Activated T-helper 1 cell treated with anti-CD3 and anti-CD28 coated beads, Interleukin-12 subunit alpha, Interleukin-12 subunit beta, Interleukin-2, Interleukin-4 antibody, amounts not matched to agents 30 ng/mL and 10 ng/mL and 1 ng/mL, durations not matched to agents 14 hours and 24 hours and 36 hours (primary cell): ENCODE measurements at regions of chr11 and their contacts with region 1.

Region 1: DNA sequence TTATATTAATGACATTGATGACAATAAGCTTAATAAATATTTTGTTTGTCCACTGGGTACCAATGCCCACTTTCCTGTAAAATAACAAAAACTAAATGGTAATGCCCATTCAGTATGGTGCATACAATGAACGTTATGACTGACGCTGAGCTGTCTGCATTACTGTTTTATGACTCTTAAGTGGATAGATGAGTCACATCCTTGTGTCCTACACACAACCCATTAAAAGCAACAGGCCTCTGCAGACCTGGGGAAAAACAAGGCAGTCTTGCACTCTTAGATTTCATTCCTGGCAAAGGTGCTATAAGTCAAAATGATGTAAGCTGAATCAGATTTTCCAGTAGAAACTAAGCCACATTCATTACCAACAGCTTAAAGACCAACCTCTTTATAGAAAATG is 176.3 kb upstream of the TMEM45B start:
- DNase-seq: peak; percentile 24
- H3K4me3 Mint-ChIP-seq: peak overlapping the region; percentile 21
- H3K27ac Mint-ChIP-seq: peak overlapping the region; percentile 86
- H3K4me1 Mint-ChIP-seq: peaks cover 80% of the 10 kb centered on the region
- H3K27me3 Mint-ChIP-seq: no peaks in the 10 kb centered on the region

Region 2: GRCh38 chr11:128868841-128869580 is 770.3 kb before region 1 on chr11:
- intact Hi-C with region 1: loop called (anchors 5 kb)
- DNase-seq: no peak
- H3K4me3 Mint-ChIP-seq: no peak overlapping the region
- H3K27ac Mint-ChIP-seq: no peak overlapping the region
- H3K4me1 Mint-ChIP-seq: no peaks in the 10 kb centered on the region
- H3K27me3 Mint-ChIP-seq: peaks cover 13% of the 10 kb centered on the region

Region 3: GRCh38 chr11:129249351-129249750 is 389.9 kb before region 1 on chr11:
- intact Hi-C with region 1: no loop called
- DNase-seq: no peak
- H3K4me3 Mint-ChIP-seq: no peak overlapping the region
- H3K27ac Mint-ChIP-seq: no peak overlapping the region
- H3K4me1 Mint-ChIP-seq: peaks cover 11% of the 10 kb centered on the region
- H3K27me3 Mint-ChIP-seq: no peaks in the 10 kb centered on the region

Region 4: GRCh38 chr11:129279326-129280026 is 359.8 kb before region 1 on chr11:
- intact Hi-C with region 1: loop called (anchors 10 kb)
- DNase-seq: peak; percentile 74
- H3K4me3 Mint-ChIP-seq: peak overlapping the region; percentile 79
- H3K27ac Mint-ChIP-seq: peak overlapping the region; percentile 81
- H3K4me1 Mint-ChIP-seq: peaks cover 40% of the 10 kb centered on the region
- H3K27me3 Mint-ChIP-seq: peaks cover 29% of the 10 kb centered on the region

Region 5: GRCh38 chr11:129408865-129409444 is 230.3 kb before region 1 on chr11:
- intact Hi-C with region 1: loop called (anchors 2 kb)
- DNase-seq: no peak
- H3K4me3 Mint-ChIP-seq: no peak overlapping the region
- H3K27ac Mint-ChIP-seq: peak overlapping the region; percentile 87
- H3K4me1 Mint-ChIP-seq: peaks cover 24% of the 10 kb centered on the region
- H3K27me3 Mint-ChIP-seq: peaks cover 3% of the 10 kb centered on the region

Region 6: GRCh38 chr11:129447654-129448239 is 191.6 kb before region 1 on chr11:
- intact Hi-C with region 1: loop called (anchors 1 kb)
- DNase-seq: no peak
- H3K4me3 Mint-ChIP-seq: no peak overlapping the region
- H3K27ac Mint-ChIP-seq: peak overlapping the region; percentile 66
- H3K4me1 Mint-ChIP-seq: peaks cover 32% of the 10 kb centered on the region
- H3K27me3 Mint-ChIP-seq: peaks cover 2% of the 10 kb centered on the region

Region 7: GRCh38 chr11:129652828-129653227 is 13.5 kb after region 1 on chr11:
- intact Hi-C with region 1: no loop called
- DNase-seq: no peak
- H3K4me3 Mint-ChIP-seq: no peak overlapping the region
- H3K27ac Mint-ChIP-seq: no peak overlapping the region
- H3K4me1 Mint-ChIP-seq: peaks cover 3% of the 10 kb centered on the region
- H3K27me3 Mint-ChIP-seq: no peaks in the 10 kb centered on the region

Region 8: DNA sequence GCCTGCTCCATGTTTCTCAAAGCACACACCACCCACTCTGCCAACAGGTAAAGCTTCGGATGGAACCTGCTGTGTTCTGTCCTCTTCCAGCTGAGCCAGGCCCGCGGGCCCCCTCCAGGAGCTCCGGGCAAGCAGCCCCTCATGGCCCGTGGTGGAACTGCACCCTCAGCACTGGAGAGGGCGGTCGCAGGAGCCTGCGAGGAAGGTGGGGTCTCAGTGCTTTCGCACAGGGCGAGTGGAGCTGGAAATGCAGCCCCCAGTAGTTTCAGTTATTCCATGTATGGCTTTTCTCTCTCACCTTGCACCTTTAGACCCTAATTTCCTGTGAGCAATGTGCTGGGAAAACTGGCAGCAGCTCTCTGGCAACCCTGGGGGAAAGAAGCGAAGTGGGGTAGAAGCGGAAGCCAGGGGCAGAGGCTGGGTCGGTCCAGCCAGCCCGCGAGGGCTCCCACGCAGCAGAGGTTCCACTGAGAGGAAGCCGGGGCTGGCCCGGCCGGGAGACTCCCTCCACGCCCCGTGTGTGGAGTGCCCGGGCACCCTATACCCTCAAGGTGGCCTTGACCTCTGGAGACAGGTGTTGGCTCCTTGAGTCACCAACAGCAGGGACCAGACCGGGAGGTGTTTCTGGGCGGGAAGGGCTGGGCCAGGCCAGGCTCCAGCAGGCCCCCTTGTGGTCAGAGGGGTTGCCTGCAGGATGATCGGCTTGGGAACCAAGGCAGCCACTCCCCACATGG is 56.4 kb after region 1 on chr11:
- intact Hi-C with region 1: loop called (anchors 2 kb)
- DNase-seq: peak; percentile 26
- H3K4me3 Mint-ChIP-seq: peak overlapping the region; percentile 56
- H3K27ac Mint-ChIP-seq: peak overlapping the region; percentile 31
- H3K4me1 Mint-ChIP-seq: peaks cover 5% of the 10 kb centered on the region
- H3K27me3 Mint-ChIP-seq: no peaks in the 10 kb centered on the region

Region 9: DNA sequence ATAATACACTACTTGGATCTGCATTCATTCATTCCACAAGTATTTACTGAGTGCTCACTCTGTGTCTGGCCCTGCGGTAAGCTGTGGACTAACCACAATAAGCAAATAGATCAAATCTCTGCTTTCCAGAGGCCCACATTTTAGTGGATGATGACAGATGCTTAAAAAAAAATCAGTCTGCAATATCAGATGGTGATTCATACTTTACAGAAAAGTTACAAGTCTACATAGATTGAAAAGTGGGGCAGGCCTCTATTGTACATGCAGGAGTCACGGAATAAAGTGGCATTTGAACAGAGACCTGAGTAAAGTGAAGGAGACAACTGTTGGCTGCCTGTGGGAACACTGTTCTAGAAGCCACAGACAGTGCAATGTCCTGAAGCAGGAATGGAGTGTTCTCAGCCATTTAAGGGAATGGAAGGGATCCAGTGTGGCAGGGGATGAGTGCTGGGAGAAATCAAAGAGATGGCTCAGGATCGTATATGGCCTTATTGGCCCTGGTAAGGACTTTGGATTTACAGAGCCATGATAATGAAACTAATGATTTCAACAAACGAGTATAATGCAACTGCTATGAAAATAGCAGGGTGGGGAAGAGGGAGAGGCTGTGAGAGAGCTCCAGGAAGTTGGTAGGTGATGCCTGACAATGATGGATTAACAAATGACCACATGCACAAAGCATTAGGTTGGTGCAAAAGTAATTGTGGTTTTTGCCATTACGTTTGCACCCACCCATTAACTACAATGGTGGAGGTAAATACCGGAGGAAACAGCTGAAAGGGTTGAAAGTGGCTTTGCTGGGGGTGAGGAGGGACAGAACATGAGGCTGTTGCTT is 207.4 kb after region 1 on chr11:
- intact Hi-C with region 1: no loop called
- DNase-seq: no peak
- H3K4me3 Mint-ChIP-seq: no peak overlapping the region
- H3K27ac Mint-ChIP-seq: no peak overlapping the region
- H3K4me1 Mint-ChIP-seq: peaks cover 16% of the 10 kb centered on the region
- H3K27me3 Mint-ChIP-seq: peaks cover 6% of the 10 kb centered on the region